Cardiac septum (tissue), 1 donor: ENCODE measurements at regions of chr6 and their contacts with region 1.

Region 1: DNA sequence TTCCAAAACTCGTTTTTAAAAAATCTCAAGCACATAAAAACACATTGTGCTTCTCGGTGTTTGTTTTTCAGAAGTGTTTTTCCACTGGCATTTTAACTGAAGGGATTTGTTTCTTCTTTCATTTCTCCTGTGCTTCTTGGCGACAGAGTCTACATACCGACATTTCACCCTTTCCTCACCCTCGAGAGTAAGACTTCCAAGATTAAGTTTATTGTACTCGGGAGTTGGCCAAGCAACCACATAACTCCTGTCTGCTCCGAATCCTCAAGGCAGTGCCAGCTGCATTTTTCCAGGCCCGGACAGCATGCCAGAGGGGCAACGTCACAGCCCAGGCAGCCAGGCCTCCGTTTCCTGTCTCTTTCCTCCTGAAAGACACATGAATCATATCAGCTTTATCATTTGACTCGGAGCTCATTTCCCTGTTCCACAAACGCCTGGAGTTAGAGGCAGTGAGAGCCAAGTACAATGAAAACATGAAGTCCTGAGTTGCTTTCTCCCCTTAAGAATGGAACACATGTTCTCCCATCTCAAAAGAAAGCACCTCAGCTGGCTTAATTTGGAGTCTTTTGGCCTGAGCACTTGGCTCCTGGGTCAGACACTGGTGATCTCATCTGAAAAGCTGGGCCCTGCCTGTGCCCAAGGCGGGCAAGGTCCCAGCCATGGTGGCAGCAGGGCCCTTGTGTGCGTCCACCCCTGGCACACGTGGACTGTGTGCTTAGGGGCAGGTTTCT is 23.2 kb upstream of the FAM50B start:
- DNase-seq: peak; percentile 91

Region 2: GRCh38 chr6:3751730-3752542 is 74.1 kb before region 1 on chr6:
- intact Hi-C with region 1: loop called (anchors 2 kb)
- DNase-seq: peak; percentile 94

Region 3: DNA sequence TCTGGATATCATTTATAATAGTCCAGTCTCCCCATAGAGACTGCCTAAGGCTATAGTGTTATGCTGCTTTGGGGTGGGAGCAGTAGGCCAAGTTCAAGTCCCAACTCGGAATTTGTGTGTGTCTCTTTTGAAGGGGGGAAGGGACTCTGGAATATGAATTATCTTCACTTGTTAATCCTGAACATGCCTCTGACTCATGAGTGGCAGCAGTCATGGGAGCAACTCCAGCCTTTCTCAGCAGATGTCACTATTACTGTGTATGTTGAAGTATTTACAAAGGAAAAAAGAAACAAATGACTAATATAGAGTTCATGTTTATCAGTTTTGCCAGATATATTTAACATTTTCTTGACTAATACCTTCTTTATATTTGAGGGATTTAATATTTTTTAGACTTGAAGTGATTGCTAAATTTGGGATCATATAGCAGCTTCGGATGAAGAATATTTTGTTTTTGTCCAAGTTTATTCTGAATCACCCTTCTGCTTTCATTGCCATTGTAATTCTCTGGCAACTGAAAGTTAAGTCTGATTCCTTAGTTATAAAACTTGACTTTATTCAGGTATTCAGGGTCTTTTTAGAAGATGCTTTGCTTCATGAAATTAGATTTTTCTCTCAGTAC is 229.5 kb after region 1 on chr6:
- intact Hi-C with region 1: no loop called
- DNase-seq: no peak